ENCODE measurements at regions of chr5 and their contacts with region 1.

Region 1: DNA sequence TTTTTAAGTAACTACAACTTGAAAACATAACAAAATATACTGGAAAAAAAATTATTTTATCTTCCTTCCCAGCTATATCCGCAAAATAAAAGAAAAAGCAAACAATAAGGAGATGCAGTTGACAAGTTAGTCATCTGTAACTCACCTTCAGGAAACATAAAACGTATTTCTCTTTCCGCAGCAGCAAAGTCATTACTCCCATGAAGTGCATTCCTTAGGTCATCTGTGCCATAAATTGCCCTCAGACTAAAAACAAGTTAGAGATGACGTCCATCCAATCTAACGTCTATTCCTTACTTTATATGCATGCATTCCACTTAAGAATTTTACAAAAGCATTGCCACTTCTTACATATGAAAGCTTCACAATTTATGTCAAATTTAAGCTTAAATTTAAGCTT is 10.9 kb downstream of the NME5 start:
- DNase-seq: no peak
- H3K4me3 ChIP-seq: no peak overlapping the region
- H3K27ac ChIP-seq: no peak overlapping the region
- H3K4me1 ChIP-seq: peaks cover 0 to 4% (median 0%) of the 10 kb centered on the region in 4 donors
- H3K27me3 ChIP-seq: no peaks in the 10 kb centered on the region
- CTCF ChIP-seq: no peak
- EP300 ChIP-seq: no peak
- POLR2A ChIP-seq: no peak

Region 2: DNA sequence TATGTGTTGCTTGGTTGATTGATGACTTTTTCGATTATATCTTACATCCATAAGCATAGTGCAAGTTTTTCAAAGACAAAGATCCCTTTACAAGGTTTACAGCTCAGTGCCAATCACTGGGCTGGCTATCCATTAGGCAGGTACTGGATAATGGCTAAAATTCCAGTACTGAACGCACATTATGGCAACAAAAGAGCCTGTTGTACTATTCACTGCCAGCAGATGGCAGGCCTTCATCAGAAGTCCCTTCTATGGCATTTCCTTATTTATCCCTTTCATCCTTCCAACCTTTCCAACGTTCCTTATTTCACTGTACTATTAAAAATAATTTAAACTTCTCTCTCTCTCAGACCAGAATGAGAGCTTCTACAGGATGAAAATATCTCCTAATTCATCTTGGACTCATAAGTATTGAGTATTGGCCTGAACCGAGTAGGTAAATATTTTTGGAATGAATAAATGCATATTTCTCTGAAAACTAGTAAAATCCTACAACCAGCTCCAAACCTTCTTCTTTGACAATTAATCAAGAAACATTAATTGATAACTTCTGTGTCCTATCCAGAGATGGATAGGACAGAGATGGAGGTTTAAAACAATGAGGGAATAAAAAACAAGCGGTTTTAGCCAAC is 51.2 kb before region 1 on chr5:
- intact Hi-C with region 1: loop called (anchors 1 kb)
- DNase-seq: no peak
- H3K4me3 ChIP-seq: no peak overlapping the region
- H3K27ac ChIP-seq: no peak overlapping the region
- H3K4me1 ChIP-seq: peaks cover 0 to 11% (median 0%) of the 10 kb centered on the region in 4 donors
- H3K27me3 ChIP-seq: no peaks in the 10 kb centered on the region
- CTCF ChIP-seq: peak; percentile 78 to 89 (median 86)
- EP300 ChIP-seq: no peak
- POLR2A ChIP-seq: no peak

Measured in esophagus muscularis mucosa (tissue), 4 donors.